Ovary (tissue), 10 donors: ENCODE measurements at regions of chr20 and their contacts with region 1.

Region 1: GRCh38 chr20:5557123-5557522 is 193.1 kb upstream of the SHLD1 start:
- DNase-seq: peak in 2 of 5 donors; percentile 34 to 36
- H3K4me3 ChIP-seq: no peak overlapping the region
- H3K27ac ChIP-seq: no peak overlapping the region
- H3K4me1 ChIP-seq: peaks cover 4% of the 10 kb centered on the region
- H3K27me3 ChIP-seq: no peaks in the 10 kb centered on the region
- CTCF ChIP-seq: peak in 1 of 3 donors; percentile 10
- EP300 ChIP-seq: no peak
- POLR2A ChIP-seq: no peak

Region 2: DNA sequence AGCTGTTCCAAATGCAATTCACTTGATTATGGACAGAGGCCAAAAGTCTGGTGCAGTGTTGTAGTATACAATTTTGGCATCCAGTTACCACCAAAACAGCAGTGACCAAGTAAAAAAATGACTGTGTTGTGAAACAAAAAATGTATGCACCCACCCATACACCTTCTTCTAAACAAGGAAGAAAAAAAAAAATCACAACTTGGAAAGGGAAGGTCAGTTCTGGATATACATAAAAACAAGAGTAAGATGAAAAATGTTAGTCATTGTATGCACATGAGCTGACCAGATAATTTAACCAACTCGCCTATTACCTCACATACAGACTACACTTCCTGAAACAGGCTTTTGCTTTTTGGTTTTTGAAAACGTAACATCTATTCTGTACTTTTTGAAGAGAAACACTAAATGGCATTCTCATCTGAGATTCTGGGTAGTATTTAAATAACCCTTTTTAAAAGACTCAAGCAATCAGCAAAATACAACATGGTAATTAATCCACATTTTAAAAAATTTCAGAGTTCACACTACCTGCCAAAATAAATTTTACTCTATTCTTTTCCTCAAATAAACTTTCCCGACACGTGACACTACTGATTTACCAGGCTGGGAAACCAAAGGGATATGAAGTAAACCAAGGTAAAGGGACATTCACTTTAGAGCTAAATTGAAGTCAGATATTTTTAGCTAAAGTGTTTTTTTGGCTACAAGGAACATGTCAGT is 51.5 kb after region 1 on chr20:
- intact Hi-C with region 1: loop called in 1 of 4 experiments (anchors 10 kb)
- DNase-seq: no peak
- H3K4me3 ChIP-seq: no peak overlapping the region
- H3K27ac ChIP-seq: no peak overlapping the region
- H3K4me1 ChIP-seq: peaks cover 6% of the 10 kb centered on the region
- H3K27me3 ChIP-seq: no peaks in the 10 kb centered on the region
- CTCF ChIP-seq: no peak
- EP300 ChIP-seq: no peak
- POLR2A ChIP-seq: no peak